MCF 10A (cell line): ENCODE measurements at regions of chr21 and their contacts with region 1.

Region 1: GRCh38 chr21:32392880-32393676 is at the start of gene URB1:
- DNase-seq: peak; percentile 86
- H3K4me3 Mint-ChIP-seq: peak within 1 kb of the TSS; percentile 81
- H3K27ac Mint-ChIP-seq: peak within 1 kb of the TSS; percentile 84
- H3K4me1 Mint-ChIP-seq: peaks cover 31% of the 10 kb centered on the region
- H3K27me3 Mint-ChIP-seq: no peaks in the 10 kb centered on the region
- CTCF ChIP-seq: no peak
- total RNA-seq, gene URB1: 32.3 and 43.5 TPM in 2 replicates

Region 2: GRCh38 chr21:32371913-32372314 is 21.2 kb before region 1 on chr21:
- CTCF ChIA-PET with region 1: interaction called, 9 read pairs
- POLR2A ChIA-PET with region 1: interaction called, 41 read pairs
- intact Hi-C with region 1: no loop called
- DNase-seq: peak; percentile 95
- H3K4me3 Mint-ChIP-seq: peak overlapping the region; percentile 31
- H3K27ac Mint-ChIP-seq: peak overlapping the region; percentile 95
- H3K4me1 Mint-ChIP-seq: peaks cover 39% of the 10 kb centered on the region
- H3K27me3 Mint-ChIP-seq: no peaks in the 10 kb centered on the region
- CTCF ChIP-seq: no peak

Region 3: GRCh38 chr21:32403201-32403777 is 10.2 kb after region 1 on chr21:
- CTCF ChIA-PET with region 1: interaction called, 16 read pairs
- POLR2A ChIA-PET with region 1: interaction called, 97 read pairs
- intact Hi-C with region 1: no loop called
- DNase-seq: peak; percentile 81
- H3K4me3 Mint-ChIP-seq: no peak overlapping the region
- H3K27ac Mint-ChIP-seq: no peak overlapping the region
- H3K4me1 Mint-ChIP-seq: no peaks in the 10 kb centered on the region
- H3K27me3 Mint-ChIP-seq: peaks cover 12% of the 10 kb centered on the region
- CTCF ChIP-seq: peak; percentile 66

Region 4: GRCh38 chr21:32412162-32413014 is 19.3 kb after region 1 on chr21 and contains the start of gene EVA1C:
- CTCF ChIA-PET with region 1: interaction called, 6 read pairs
- POLR2A ChIA-PET with region 1: interaction called, 97 read pairs
- intact Hi-C with region 1: no loop called
- DNase-seq: peak; percentile 72
- H3K4me3 Mint-ChIP-seq: peak within 1 kb of the TSS; percentile 97
- H3K27ac Mint-ChIP-seq: peak within 1 kb of the TSS; percentile 87
- H3K4me1 Mint-ChIP-seq: peaks cover 44% of the 10 kb centered on the region
- H3K27me3 Mint-ChIP-seq: no peaks in the 10 kb centered on the region
- CTCF ChIP-seq: no peak
- total RNA-seq, gene EVA1C: 16.8 and 22.2 TPM in 2 replicates